CD14-positive monocyte (primary cell): ENCODE measurements at regions of chr11 and their contacts with region 1.

Region 1: GRCh38 chr11:29432719-29433325 is 584.0 kb downstream of the KCNA4 start:
- DNase-seq: peak in 1 of 3 donors; percentile 3
- H3K4me3 ChIP-seq: no peak overlapping the region
- H3K4me3 Mint-ChIP-seq: no peak overlapping the region
- H3K27ac ChIP-seq: no peak overlapping the region
- H3K27ac Mint-ChIP-seq: no peak overlapping the region
- H3K4me1 ChIP-seq: no peaks in the 10 kb centered on the region
- H3K4me1 Mint-ChIP-seq: no peaks in the 10 kb centered on the region
- H3K27me3 ChIP-seq: no peaks in the 10 kb centered on the region
- H3K27me3 Mint-ChIP-seq: peaks cover 0 to 3% (median 1%) of the 10 kb centered on the region in 3 donors
- CTCF ChIP-seq: peak; percentile 60

Region 2: GRCh38 chr11:29129850-29130249 is 303.0 kb before region 1 on chr11:
- intact Hi-C with region 1: no loop called
- DNase-seq: no peak
- H3K4me3 ChIP-seq: no peak overlapping the region
- H3K4me3 Mint-ChIP-seq: no peak overlapping the region
- H3K27ac ChIP-seq: no peak overlapping the region
- H3K27ac Mint-ChIP-seq: no peak overlapping the region
- H3K4me1 ChIP-seq: no peaks in the 10 kb centered on the region
- H3K4me1 Mint-ChIP-seq: no peaks in the 10 kb centered on the region
- H3K27me3 ChIP-seq: no peaks in the 10 kb centered on the region
- H3K27me3 Mint-ChIP-seq: peaks cover 0 to 2% (median 0%) of the 10 kb centered on the region in 3 donors
- CTCF ChIP-seq: no peak

Region 3: GRCh38 chr11:30143098-30143705 is 710.4 kb after region 1 on chr11:
- intact Hi-C with region 1: loop called in 1 of 2 experiments (anchors 10 kb)
- DNase-seq: peak in 2 of 3 donors; percentile 4 to 21
- H3K4me3 ChIP-seq: no peak overlapping the region
- H3K4me3 Mint-ChIP-seq: no peak overlapping the region
- H3K27ac ChIP-seq: no peak overlapping the region
- H3K27ac Mint-ChIP-seq: no peak overlapping the region
- H3K4me1 ChIP-seq: no peaks in the 10 kb centered on the region
- H3K4me1 Mint-ChIP-seq: no peaks in the 10 kb centered on the region
- H3K27me3 ChIP-seq: no peaks in the 10 kb centered on the region
- H3K27me3 Mint-ChIP-seq: peaks cover 0 to 5% (median 4%) of the 10 kb centered on the region in 3 donors
- CTCF ChIP-seq: peak; percentile 83